H1 (cell line): ENCODE measurements at regions of chrX and their contacts with region 1.

Region 1: GRCh38 chrX:129678614-129679195 is 23.9 kb upstream of the APLN start:
- DNase-seq: no peak
- H3K4me3 ChIP-seq: peak overlapping the region in 3 of 4 experiments; percentile 34 to 51 (median 35); a peak in 7 of 8 replicates
- H3K27ac ChIP-seq: no peak overlapping the region
- H3K4me1 ChIP-seq: peaks cover 0 to 6% (median 1%) of the 10 kb centered on the region in 4 experiments; a peak in 4 of 7 replicates
- H3K27me3 ChIP-seq: peaks cover 0 to 6% (median 2%) of the 10 kb centered on the region in 4 experiments; a peak in 3 of 7 replicates
- CTCF ChIP-seq: no peak
- EP300 ChIP-seq: no peak
- POLR2A ChIP-seq: no peak
- RAD21 ChIP-seq: no peak

Region 2: GRCh38 chrX:129593137-129593536 is 85.6 kb before region 1 on chrX:
- CTCF ChIA-PET with region 1: no interaction called
- POLR2A ChIA-PET with region 1: no interaction called
- DNase-seq: no peak
- H3K4me3 ChIP-seq: no peak overlapping the region
- H3K27ac ChIP-seq: no peak overlapping the region
- H3K4me1 ChIP-seq: no peaks in the 10 kb centered on the region
- H3K27me3 ChIP-seq: no peaks in the 10 kb centered on the region
- CTCF ChIP-seq: no peak
- EP300 ChIP-seq: no peak
- POLR2A ChIP-seq: no peak
- RAD21 ChIP-seq: no peak

Region 3: GRCh38 chrX:129654419-129655165 is 24.1 kb before region 1 on chrX and contains the start of gene APLN:
- CTCF ChIA-PET with region 1: interaction called, 12 read pairs
- POLR2A ChIA-PET with region 1: no interaction called
- DNase-seq: peak in 1 of 2 experiments; percentile 50
- H3K4me3 ChIP-seq: peak within 1 kb of the TSS; percentile 27 to 64 (median 45)
- H3K27ac ChIP-seq: no peak within 1 kb of the TSS
- H3K4me1 ChIP-seq: peaks cover 3 to 12% (median 6%) of the 10 kb centered on the region in 4 experiments; a peak in 6 of 7 replicates
- H3K27me3 ChIP-seq: peaks cover 14 to 62% (median 43%) of the 10 kb centered on the region in 4 experiments
- CTCF ChIP-seq: no peak
- EP300 ChIP-seq: no peak
- POLR2A ChIP-seq: no peak
- RAD21 ChIP-seq: no peak
- total RNA-seq, gene APLN: 1.1 TPM in 2 replicates

Region 4: GRCh38 chrX:129690435-129690834 is 11.7 kb after region 1 on chrX:
- CTCF ChIA-PET with region 1: interaction called, 11 read pairs
- POLR2A ChIA-PET with region 1: interaction called, 4 read pairs
- DNase-seq: no peak
- H3K4me3 ChIP-seq: no peak overlapping the region
- H3K27ac ChIP-seq: no peak overlapping the region
- H3K4me1 ChIP-seq: peaks cover 0 to 9% (median 4%) of the 10 kb centered on the region in 4 experiments; a peak in 4 of 7 replicates
- H3K27me3 ChIP-seq: no peaks in the 10 kb centered on the region
- CTCF ChIP-seq: no peak
- EP300 ChIP-seq: no peak
- POLR2A ChIP-seq: no peak
- RAD21 ChIP-seq: no peak

Region 5: DNA sequence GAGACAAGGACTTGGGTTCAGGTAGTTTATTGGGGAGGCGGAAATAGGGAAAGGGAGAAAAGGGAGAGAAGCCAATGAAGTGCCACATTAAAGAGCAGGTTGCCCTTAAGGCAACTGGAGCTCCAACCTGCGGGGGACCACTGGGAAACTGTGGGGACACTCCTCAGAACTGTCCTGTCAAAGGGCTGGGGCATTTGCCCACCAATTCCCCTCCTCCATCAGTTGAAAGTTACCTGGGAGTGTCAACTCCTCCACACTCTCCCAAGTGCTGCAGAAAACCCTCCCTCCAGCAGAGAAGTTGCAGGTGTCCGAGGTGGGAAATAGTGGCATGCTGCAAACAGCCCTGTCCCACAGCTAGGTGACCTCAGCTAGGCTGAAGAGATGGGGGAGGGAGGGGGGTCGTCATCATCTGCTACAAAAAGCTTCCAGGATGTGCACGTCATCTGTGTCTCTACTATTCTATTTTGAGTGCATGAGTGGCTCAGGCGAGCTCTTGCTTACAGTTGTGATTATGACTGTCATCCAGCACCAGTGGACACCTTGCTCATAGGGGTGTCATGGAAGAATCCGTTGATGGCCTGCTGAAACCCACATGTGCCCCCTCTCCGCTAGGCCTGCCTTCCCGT is 18.6 kb after region 1 on chrX:
- CTCF ChIA-PET with region 1: interaction called, 10 read pairs
- POLR2A ChIA-PET with region 1: interaction called, 4 read pairs
- DNase-seq: no peak
- H3K4me3 ChIP-seq: peak overlapping the region in 1 of 4 experiments; percentile 32; a peak in 1 of 8 replicates
- H3K27ac ChIP-seq: no peak overlapping the region
- H3K4me1 ChIP-seq: peaks cover 0 to 16% (median 8%) of the 10 kb centered on the region in 4 experiments; a peak in 5 of 7 replicates
- H3K27me3 ChIP-seq: no peaks in the 10 kb centered on the region
- CTCF ChIP-seq: no peak
- EP300 ChIP-seq: no peak
- POLR2A ChIP-seq: no peak
- RAD21 ChIP-seq: no peak